ENCODE measurements at regions of chr2 and their contacts with region 1.

Region 1: DNA sequence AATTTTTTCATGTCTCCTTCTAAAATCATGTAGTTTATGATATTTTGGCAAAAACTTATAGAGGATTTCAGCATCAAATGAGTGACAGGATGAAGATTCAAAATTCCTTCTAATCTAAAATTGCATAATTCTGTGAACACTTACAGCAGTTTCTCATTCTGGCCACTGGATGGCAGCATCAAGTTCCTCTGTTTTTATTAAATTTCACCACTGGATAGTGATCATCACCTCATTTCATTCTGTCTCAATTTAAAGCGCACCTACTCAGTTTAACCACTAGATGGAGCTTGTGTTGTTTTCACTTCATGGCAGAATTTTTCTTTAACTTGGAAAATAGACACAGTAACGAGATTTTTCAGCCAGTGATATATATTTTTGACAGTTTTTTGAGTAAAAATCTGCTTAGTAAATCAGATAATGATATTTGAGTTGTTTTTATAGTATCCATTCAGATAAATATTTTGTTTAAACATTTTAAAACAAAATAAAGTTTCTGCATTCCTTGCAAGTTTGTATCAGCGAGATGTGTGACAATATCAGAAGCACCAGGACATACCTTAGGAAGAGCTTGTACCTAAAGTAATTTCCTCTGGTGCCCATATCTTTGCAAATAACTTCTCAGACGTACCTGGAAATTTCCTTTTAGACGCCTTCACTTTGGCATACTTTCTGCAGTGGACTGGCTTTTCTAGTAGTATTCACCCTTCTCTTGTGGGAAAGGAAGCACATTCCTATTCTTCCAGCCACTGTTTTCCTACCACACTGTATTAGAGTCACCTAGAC is 94.7 kb upstream of the ARHGAP15 start:
- DNase-seq: peak in 7 of 9 donors; percentile 59 to 84 (median 75)
- ATAC-seq: peak; percentile 100
- H3K4me3 ChIP-seq: no peak overlapping the region
- H3K4me3 Mint-ChIP-seq: no peak overlapping the region
- H3K27ac ChIP-seq: no peak overlapping the region
- H3K27ac Mint-ChIP-seq: peak overlapping the region in 1 of 9 donors; percentile 15
- H3K4me1 ChIP-seq: no peaks in the 10 kb centered on the region
- H3K4me1 Mint-ChIP-seq: peaks cover 0 to 9% (median 0%) of the 10 kb centered on the region in 7 donors
- H3K27me3 ChIP-seq: no peaks in the 10 kb centered on the region
- H3K27me3 Mint-ChIP-seq: peaks cover 0 to 8% (median 0%) of the 10 kb centered on the region in 5 donors

Region 2: GRCh38 chr2:143051465-143051864 is 17.0 kb after region 1 on chr2:
- CTCF ChIA-PET with region 1: no interaction called
- POLR2A ChIA-PET with region 1: no interaction called
- intact Hi-C with region 1: no loop called
- DNase-seq: no peak
- ATAC-seq: no peak
- H3K4me3 ChIP-seq: no peak overlapping the region
- H3K4me3 Mint-ChIP-seq: no peak overlapping the region
- H3K27ac ChIP-seq: no peak overlapping the region
- H3K27ac Mint-ChIP-seq: no peak overlapping the region
- H3K4me1 ChIP-seq: no peaks in the 10 kb centered on the region
- H3K4me1 Mint-ChIP-seq: peaks cover 0 to 3% (median 0%) of the 10 kb centered on the region in 7 donors
- H3K27me3 ChIP-seq: no peaks in the 10 kb centered on the region
- H3K27me3 Mint-ChIP-seq: peaks cover 0 to 24% (median 12%) of the 10 kb centered on the region in 5 donors

Region 3: GRCh38 chr2:143217512-143218115 is 183.1 kb after region 1 on chr2:
- CTCF ChIA-PET with region 1: interaction called, 3 read pairs
- POLR2A ChIA-PET with region 1: no interaction called
- intact Hi-C with region 1: loop called (anchors 1 to 2 kb)
- DNase-seq: no peak
- ATAC-seq: peak; percentile 75
- H3K4me3 ChIP-seq: no peak overlapping the region
- H3K4me3 Mint-ChIP-seq: peak overlapping the region in 3 of 10 donors; percentile 10 to 31 (median 25)
- H3K27ac ChIP-seq: no peak overlapping the region
- H3K27ac Mint-ChIP-seq: peak overlapping the region; percentile 17 to 85 (median 53)
- H3K4me1 ChIP-seq: peaks cover 4 to 5% of the 10 kb centered on the region in 2 donors
- H3K4me1 Mint-ChIP-seq: peaks cover 29 to 81% (median 67%) of the 10 kb centered on the region in 7 donors
- H3K27me3 ChIP-seq: no peaks in the 10 kb centered on the region
- H3K27me3 Mint-ChIP-seq: no peaks in the 10 kb centered on the region

Region 4: DNA sequence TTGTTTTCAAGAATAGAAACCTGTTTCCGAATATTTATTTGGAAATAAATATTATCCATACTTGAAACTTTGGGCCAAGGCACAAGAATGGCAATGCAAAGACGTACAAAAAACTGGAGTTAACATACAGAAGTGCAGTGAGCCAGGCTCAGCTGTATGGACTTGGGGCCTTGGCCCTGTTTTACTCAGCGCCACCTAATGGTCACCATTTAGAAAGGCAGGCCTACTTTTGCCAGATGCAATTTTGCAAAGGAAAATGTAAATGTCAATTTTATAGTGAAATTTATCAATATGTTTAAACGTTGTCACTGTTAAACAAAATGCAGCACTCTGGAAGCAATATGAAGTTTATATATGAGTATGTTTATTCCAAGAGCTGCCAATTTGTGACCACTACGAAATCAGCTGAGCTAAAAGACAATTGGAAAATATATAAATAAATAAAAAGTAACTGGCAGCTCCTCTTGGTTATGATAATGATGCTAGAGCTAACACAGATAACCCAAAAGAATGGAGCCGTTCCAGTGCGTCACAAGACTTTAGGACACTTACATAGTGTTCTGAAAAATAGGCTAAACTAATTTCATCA is 249.7 kb after region 1 on chr2:
- CTCF ChIA-PET with region 1: no interaction called
- POLR2A ChIA-PET with region 1: no interaction called
- intact Hi-C with region 1: loop called (anchors 1 kb)
- DNase-seq: peak in 6 of 9 donors; percentile 6 to 37 (median 26)
- ATAC-seq: peak; percentile 84
- H3K4me3 ChIP-seq: no peak overlapping the region
- H3K4me3 Mint-ChIP-seq: no peak overlapping the region
- H3K27ac ChIP-seq: no peak overlapping the region
- H3K27ac Mint-ChIP-seq: peak overlapping the region in 4 of 9 donors; percentile 13 to 67 (median 42)
- H3K4me1 ChIP-seq: no peaks in the 10 kb centered on the region
- H3K4me1 Mint-ChIP-seq: peaks cover 16 to 70% (median 49%) of the 10 kb centered on the region in 7 donors
- H3K27me3 ChIP-seq: no peaks in the 10 kb centered on the region
- H3K27me3 Mint-ChIP-seq: no peaks in the 10 kb centered on the region

Region 5: GRCh38 chr2:143564419-143564818 is 529.9 kb after region 1 on chr2:
- CTCF ChIA-PET with region 1: no interaction called
- POLR2A ChIA-PET with region 1: no interaction called
- intact Hi-C with region 1: loop called in 1 of 2 experiments (anchors 10 kb)
- DNase-seq: no peak
- ATAC-seq: no peak
- H3K4me3 ChIP-seq: no peak overlapping the region
- H3K4me3 Mint-ChIP-seq: no peak overlapping the region
- H3K27ac ChIP-seq: no peak overlapping the region
- H3K27ac Mint-ChIP-seq: no peak overlapping the region
- H3K4me1 ChIP-seq: no peaks in the 10 kb centered on the region
- H3K4me1 Mint-ChIP-seq: peaks cover 0 to 14% (median 6%) of the 10 kb centered on the region in 7 donors
- H3K27me3 ChIP-seq: no peaks in the 10 kb centered on the region
- H3K27me3 Mint-ChIP-seq: no peaks in the 10 kb centered on the region

Region 6: GRCh38 chr2:144516981-144517865 is 1482.7 kb after region 1 on chr2:
- CTCF ChIA-PET with region 1: no interaction called
- POLR2A ChIA-PET with region 1: no interaction called
- intact Hi-C with region 1: loop called in 1 of 2 experiments (anchors 10 kb)
- DNase-seq: peak in 6 of 9 donors; percentile 14 to 62 (median 32)
- ATAC-seq: peak; percentile 62
- H3K4me3 ChIP-seq: peak overlapping the region; percentile 49
- H3K4me3 Mint-ChIP-seq: no peak overlapping the region
- H3K27ac ChIP-seq: peak overlapping the region; percentile 37
- H3K27ac Mint-ChIP-seq: peak overlapping the region in 3 of 9 donors; percentile 46 to 85 (median 52)
- H3K4me1 ChIP-seq: peaks cover 21 to 22% of the 10 kb centered on the region in 2 donors
- H3K4me1 Mint-ChIP-seq: peaks cover 5 to 22% (median 18%) of the 10 kb centered on the region in 7 donors
- H3K27me3 ChIP-seq: peaks cover 0 to 33% of the 10 kb centered on the region in 2 donors
- H3K27me3 Mint-ChIP-seq: peaks cover 38 to 60% (median 52%) of the 10 kb centered on the region in 5 donors

Measured in naive thymus-derived CD4-positive, alpha-beta T cell (primary cell).